ENCODE measurements at regions of chr2 and their contacts with region 1.

Region 1: DNA sequence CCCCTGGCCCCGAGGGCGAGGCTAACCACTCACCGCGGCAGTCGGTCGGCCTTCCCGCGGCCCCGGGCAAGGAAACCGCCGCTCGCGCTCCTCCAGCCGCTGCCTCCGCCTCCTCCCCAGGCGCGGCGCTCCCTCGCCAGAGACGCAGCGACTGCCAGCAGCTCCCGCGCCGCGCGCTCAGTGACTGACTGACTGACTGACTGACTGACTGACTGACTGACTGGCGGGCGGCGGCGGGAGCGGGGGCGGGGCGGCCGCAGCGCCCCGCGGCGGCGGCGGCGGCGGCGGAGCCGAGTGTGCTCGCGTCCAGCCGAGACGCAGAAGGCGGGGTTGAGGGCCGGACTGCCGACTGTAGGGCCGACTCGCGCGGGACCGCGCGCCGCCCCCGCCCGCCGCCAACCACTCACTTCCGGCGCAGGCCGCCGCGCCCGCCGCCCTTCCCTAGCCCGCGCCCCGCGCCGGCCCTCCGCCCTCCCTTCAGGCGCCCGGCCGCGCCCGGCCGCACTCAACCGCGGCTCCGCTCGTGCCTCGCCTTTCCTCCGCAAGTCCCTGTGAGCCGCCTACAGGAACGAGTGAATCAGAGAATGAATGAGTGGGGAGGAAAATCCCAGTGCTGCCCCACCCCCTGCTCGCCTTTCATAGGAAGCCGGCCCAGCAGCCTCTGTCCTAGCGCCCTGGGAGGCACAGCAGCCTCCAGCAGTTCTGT is at the start of gene RAPH1:
- DNase-seq: peak; percentile 44
- H3K4me3 Mint-ChIP-seq: peak within 1 kb of the TSS; percentile 89
- H3K27ac Mint-ChIP-seq: peak within 1 kb of the TSS; percentile 90
- H3K4me1 Mint-ChIP-seq: peaks cover 30% of the 10 kb centered on the region
- H3K27me3 Mint-ChIP-seq: peaks cover 52% of the 10 kb centered on the region
- total RNA-seq, gene RAPH1: 4.2 and 4.6 TPM in 2 replicates

Region 2: DNA sequence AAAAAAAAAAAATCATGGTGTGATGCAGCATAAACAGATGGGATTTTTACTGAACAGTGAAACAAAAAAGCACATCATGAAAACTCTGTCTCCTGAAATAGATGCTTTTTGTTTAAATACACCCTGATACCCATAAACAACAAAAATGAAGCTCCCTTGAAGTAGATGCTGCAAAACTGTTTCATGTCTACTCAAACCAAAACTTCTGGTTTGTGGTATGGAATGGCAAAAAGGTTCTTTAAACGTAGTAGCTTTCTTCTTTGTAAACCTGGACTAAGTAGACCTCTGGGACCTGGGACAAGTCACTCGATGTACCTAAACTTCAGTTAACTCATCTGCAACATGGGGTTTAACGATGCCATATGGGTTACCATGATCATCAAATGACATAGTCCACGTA is 64.3 kb after region 1 on chr2:
- intact Hi-C with region 1: loop called (anchors 1 kb)
- DNase-seq: no peak
- H3K4me3 Mint-ChIP-seq: peak overlapping the region; percentile 37
- H3K27ac Mint-ChIP-seq: no peak overlapping the region
- H3K4me1 Mint-ChIP-seq: peaks cover 39% of the 10 kb centered on the region
- H3K27me3 Mint-ChIP-seq: peaks cover 59% of the 10 kb centered on the region

Region 3: GRCh38 chr2:203612266-203612665 is 77.0 kb after region 1 on chr2:
- intact Hi-C with region 1: no loop called
- DNase-seq: no peak
- H3K4me3 Mint-ChIP-seq: no peak overlapping the region
- H3K27ac Mint-ChIP-seq: no peak overlapping the region
- H3K4me1 Mint-ChIP-seq: no peaks in the 10 kb centered on the region
- H3K27me3 Mint-ChIP-seq: peaks cover 16% of the 10 kb centered on the region

Region 4: DNA sequence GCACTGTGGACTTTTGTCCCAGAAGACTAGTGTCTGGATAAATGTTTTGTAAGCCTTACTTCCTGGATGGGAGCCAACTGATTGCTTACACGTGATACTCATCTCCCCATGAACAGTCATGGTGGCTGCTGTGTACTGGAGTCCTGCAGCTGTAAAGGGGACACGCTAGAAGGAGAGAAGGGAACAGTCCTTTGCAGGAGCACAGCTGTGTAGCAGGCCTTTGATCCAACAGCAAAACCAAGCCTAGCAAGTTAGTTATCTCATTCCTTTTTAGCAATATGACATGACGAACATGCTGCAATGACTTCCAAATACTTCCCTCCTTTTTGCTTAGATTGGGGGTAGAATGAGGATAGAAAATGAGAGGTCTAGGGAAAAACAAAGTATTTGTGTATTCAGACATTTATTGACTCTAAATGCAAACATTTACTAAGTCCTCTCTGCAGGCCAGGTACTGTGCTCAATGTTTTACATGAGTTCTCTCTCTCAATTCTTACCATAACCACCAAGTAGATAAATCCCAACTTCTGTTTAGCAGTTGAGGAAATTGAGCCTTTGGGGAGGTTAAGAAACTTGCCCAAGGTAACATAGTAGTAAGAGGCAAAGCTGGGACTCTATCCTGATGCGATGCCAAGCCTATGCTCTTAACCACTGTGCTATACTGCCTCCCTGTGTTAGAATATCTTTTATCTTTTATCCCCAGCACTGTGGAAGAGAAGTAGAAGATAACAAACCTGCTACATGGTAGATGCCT is 115.8 kb after region 1 on chr2:
- intact Hi-C with region 1: loop called (anchors 5 kb)
- DNase-seq: no peak
- H3K4me3 Mint-ChIP-seq: no peak overlapping the region
- H3K27ac Mint-ChIP-seq: no peak overlapping the region
- H3K4me1 Mint-ChIP-seq: peaks cover 36% of the 10 kb centered on the region
- H3K27me3 Mint-ChIP-seq: peaks cover 5% of the 10 kb centered on the region

Region 5: GRCh38 chr2:203718087-203718486 is 182.9 kb after region 1 on chr2:
- intact Hi-C with region 1: loop called (anchors 5 kb)
- DNase-seq: peak; percentile 67
- H3K4me3 Mint-ChIP-seq: peak overlapping the region; percentile 73
- H3K27ac Mint-ChIP-seq: peak overlapping the region; percentile 96
- H3K4me1 Mint-ChIP-seq: peaks cover 96% of the 10 kb centered on the region
- H3K27me3 Mint-ChIP-seq: no peaks in the 10 kb centered on the region

Region 6: DNA sequence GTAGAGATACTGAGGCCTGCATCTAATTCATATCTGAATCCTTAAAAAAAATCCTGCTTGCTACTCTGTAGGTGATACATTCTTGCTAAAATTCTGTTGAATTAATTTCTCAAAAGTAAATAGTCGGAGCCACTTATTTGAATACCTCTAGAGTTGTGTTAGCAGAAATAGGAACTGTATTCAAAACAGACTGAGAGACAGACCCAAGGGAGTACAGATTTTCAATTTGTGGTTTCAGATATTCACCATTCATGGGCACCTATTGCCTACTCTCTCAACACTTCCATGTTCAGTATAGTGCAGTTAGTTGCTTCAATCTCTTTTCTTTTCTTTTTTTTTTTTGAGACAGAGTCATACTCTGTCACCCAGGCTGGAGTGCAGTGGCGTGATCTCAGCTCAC is 285.7 kb after region 1 on chr2:
- intact Hi-C with region 1: no loop called
- DNase-seq: no peak
- H3K4me3 Mint-ChIP-seq: no peak overlapping the region
- H3K27ac Mint-ChIP-seq: no peak overlapping the region
- H3K4me1 Mint-ChIP-seq: peaks cover 46% of the 10 kb centered on the region
- H3K27me3 Mint-ChIP-seq: peaks cover 3% of the 10 kb centered on the region

Measured in activated T-helper 1 cell treated with anti-CD3 and anti-CD28 coated beads, Interleukin-12 subunit alpha, Interleukin-12 subunit beta, Interleukin-2, Interleukin-4 antibody, amounts not matched to agents 30 ng/mL and 10 ng/mL and 1 ng/mL, durations not matched to agents 14 hours and 24 hours and 36 hours (primary cell).